Naive thymus-derived CD8-positive, alpha-beta T cell (primary cell): ENCODE measurements at regions of chr22 and their contacts with region 1.

Region 1: DNA sequence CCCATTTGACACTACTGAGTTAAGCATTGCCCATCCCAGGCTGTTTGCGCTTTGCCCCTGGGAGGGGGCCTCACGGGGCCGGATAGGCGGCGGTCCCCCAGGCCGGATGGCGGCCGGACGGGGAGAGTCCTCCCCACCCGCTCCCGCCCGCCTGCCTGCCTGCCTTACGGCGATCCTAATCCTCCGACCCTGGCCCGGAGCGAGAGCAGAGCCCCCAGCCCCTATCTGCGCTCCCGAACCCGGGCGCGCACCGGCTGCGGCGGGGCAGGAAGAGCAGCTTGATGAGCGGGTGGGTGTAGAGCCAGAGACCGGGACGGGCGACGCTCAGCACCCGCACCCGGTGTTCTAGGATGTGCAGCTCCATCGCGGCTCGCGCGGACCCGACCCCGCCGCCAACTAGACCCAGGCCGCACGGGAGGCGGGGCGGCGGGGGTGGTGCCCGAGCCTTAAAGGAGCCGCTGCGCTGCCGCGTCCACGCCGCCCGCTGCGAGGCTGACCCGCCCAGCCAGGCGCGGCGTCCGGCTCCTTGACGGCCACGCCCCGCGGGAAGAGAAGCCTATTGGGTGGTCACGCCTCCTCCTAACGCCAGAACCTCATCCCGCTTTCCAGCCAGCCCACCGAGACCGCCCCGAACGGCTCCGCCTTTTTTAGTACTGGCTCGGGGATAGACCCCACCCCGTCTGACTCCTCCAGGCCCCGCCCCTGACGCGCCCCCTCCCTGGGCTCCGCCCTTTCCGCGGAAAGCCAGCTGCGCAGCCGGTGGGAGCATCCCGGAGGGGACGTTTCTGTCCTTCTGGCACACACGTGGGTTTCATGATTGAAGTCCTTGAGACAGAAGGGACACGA is at the start of gene CASTOR1:
- DNase-seq: peak; percentile 77 to 93 (median 86)
- ATAC-seq: peak; percentile 76 to 77
- H3K4me3 Mint-ChIP-seq: peak within 1 kb of the TSS; percentile 87 to 95 (median 92)
- H3K27ac Mint-ChIP-seq: peak within 1 kb of the TSS; percentile 89 to 97 (median 95)
- H3K4me1 Mint-ChIP-seq: peaks cover 13 to 60% (median 49%) of the 10 kb centered on the region in 4 donors
- H3K27me3 Mint-ChIP-seq: no peaks in the 10 kb centered on the region
- polyA plus RNA-seq, gene CASTOR1: 16.9 to 33.5 (median 20.8) TPM

Region 2: GRCh38 chr22:30305519-30305905 is 16.2 kb after region 1 on chr22:
- POLR2A ChIA-PET with region 1: interaction called, 416 read pairs
- DNase-seq: peak in 9 of 10 donors; percentile 37 to 73 (median 55)
- ATAC-seq: peak; percentile 43 to 55
- H3K4me3 Mint-ChIP-seq: peak overlapping the region; percentile 63 to 85 (median 74)
- H3K27ac Mint-ChIP-seq: peak overlapping the region; percentile 94 to 100 (median 98)
- H3K4me1 Mint-ChIP-seq: peaks cover 68 to 99% (median 99%) of the 10 kb centered on the region in 4 donors
- H3K27me3 Mint-ChIP-seq: no peaks in the 10 kb centered on the region

Region 3: GRCh38 chr22:30326706-30327362 is 37.5 kb after region 1 on chr22 and contains the start of gene TBC1D10A:
- POLR2A ChIA-PET with region 1: interaction called, 348 read pairs
- DNase-seq: peak; percentile 85 to 98 (median 93)
- ATAC-seq: peak; percentile 87
- H3K4me3 Mint-ChIP-seq: peak within 1 kb of the TSS; percentile 89 to 98 (median 92)
- H3K27ac Mint-ChIP-seq: peak within 1 kb of the TSS; percentile 86 to 98 (median 94)
- H3K4me1 Mint-ChIP-seq: peaks cover 31 to 54% (median 48%) of the 10 kb centered on the region in 4 donors
- H3K27me3 Mint-ChIP-seq: no peaks in the 10 kb centered on the region
- polyA plus RNA-seq, gene TBC1D10A: 56.7 to 83.4 (median 62.0) TPM

Region 4: GRCh38 chr22:30356449-30357235 is 67.3 kb after region 1 on chr22 and contains the starts of genes CCDC157 and SF3A1:
- POLR2A ChIA-PET with region 1: interaction called, 100 read pairs
- DNase-seq: peak; percentile 79 to 91 (median 86)
- ATAC-seq: peak; percentile 85 to 86
- H3K4me3 Mint-ChIP-seq: peak within 1 kb of the TSS; percentile 91 to 98 (median 96)
- H3K27ac Mint-ChIP-seq: peak within 1 kb of the TSS; percentile 93 to 99 (median 96)
- H3K4me1 Mint-ChIP-seq: peaks cover 25 to 63% (median 58%) of the 10 kb centered on the region in 4 donors
- H3K27me3 Mint-ChIP-seq: no peaks in the 10 kb centered on the region
- polyA plus RNA-seq, gene CCDC157: 0.66 to 2.5 (median 1.1) TPM
- polyA plus RNA-seq, gene SF3A1: 66.5 to 119 (median 99.8) TPM

Region 5: GRCh38 chr22:30423982-30424963 is 134.9 kb after region 1 on chr22:
- POLR2A ChIA-PET with region 1: interaction called, 47 read pairs
- DNase-seq: peak; percentile 91 to 100 (median 98)
- ATAC-seq: peak; percentile 82 to 83
- H3K4me3 Mint-ChIP-seq: peak overlapping the region; percentile 92 to 99 (median 98)
- H3K27ac Mint-ChIP-seq: peak overlapping the region; percentile 97 to 100 (median 99)
- H3K4me1 Mint-ChIP-seq: peaks cover 28 to 56% (median 55%) of the 10 kb centered on the region in 4 donors
- H3K27me3 Mint-ChIP-seq: no peaks in the 10 kb centered on the region

Region 6: DNA sequence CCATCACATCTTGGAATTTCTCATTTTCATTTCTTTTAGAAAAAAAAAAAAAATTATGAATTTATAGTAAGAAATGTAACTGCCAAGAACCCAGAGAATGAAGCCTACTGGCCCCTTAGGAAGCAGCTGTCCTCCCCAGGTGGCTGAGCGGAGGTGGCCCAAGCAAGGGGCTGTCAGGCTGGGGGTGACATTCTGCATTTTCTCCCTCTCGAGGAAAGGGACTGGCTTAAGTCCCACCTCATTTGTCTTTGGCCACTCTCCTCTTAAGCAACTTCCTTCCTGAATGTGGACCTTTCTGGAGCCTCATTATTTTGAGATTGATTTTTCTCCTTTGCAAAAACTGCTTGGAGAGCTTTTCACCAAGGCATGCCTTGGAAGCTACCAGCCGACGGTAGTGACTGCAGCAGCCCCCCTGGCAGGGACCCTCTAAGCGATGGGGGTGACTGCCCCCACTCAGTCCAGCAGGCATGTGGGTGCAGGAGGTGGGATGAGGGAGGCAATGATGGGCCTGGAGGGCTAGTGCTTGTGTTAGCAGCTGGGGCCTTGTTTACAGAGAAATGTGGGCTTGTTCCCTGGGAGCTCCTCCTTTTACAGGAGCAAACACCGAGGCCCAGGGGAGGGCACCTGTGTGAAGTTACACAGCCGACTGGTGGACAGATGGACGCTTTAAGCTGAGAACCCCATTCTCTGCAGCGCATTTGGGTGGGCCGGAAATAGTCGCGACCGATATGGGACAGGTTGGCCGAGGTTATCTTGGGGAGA is 567.6 kb after region 1 on chr22:
- POLR2A ChIA-PET with region 1: no interaction called
- DNase-seq: no peak
- ATAC-seq: no peak
- H3K4me3 Mint-ChIP-seq: no peak overlapping the region
- H3K27ac Mint-ChIP-seq: no peak overlapping the region
- H3K4me1 Mint-ChIP-seq: peaks cover 0 to 4% (median 0%) of the 10 kb centered on the region in 4 donors
- H3K27me3 Mint-ChIP-seq: peaks cover 0 to 5% (median 0%) of the 10 kb centered on the region in 5 donors